T-cell (primary cell): ENCODE measurements at regions of chr17 and their contacts with region 1.

Region 1: DNA sequence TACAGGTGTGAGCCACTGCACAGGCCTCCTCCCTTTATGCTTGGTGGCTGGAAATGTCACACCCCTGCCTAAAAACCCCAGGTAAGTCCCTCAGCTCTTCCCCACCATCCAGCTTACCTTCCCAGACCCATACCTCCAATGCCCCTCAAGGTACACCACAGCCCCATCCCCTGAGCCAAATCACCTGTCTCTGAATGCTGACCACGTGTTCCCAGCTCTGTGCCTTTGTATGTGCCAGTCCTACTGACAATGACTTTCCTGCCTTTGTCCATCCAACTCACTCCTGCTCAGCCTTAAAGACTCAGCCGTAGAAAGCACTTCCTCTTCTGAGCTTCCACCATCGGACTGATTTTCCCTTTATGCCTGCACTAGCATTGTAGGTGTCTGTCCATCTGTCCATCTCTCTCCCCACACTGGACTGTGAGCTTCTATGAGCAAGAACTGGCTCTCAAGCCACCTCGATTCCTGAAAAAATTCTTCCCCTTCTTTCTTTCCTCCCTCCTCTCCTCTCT is 30.7 kb upstream of the GOSR2 start:
- DNase-seq: no peak
- ATAC-seq: no peak
- H3K4me3 ChIP-seq: no peak overlapping the region
- H3K4me3 Mint-ChIP-seq: no peak overlapping the region
- H3K27ac ChIP-seq: no peak overlapping the region
- H3K27ac Mint-ChIP-seq: no peak overlapping the region
- H3K4me1 ChIP-seq: no peaks in the 10 kb centered on the region
- H3K4me1 Mint-ChIP-seq: no peaks in the 10 kb centered on the region
- H3K27me3 ChIP-seq: peaks cover 0 to 47% of the 10 kb centered on the region in 2 experiments
- H3K27me3 Mint-ChIP-seq: peaks cover 9 to 24% of the 10 kb centered on the region in 2 donors

Region 2: GRCh38 chr17:46811978-46812583 is 80.2 kb before region 1 on chr17:
- CTCF ChIA-PET with region 1: no interaction called
- POLR2A ChIA-PET with region 1: no interaction called
- DNase-seq: no peak
- ATAC-seq: no peak
- H3K4me3 ChIP-seq: no peak overlapping the region
- H3K4me3 Mint-ChIP-seq: no peak overlapping the region
- H3K27ac ChIP-seq: no peak overlapping the region
- H3K27ac Mint-ChIP-seq: no peak overlapping the region
- H3K4me1 ChIP-seq: peaks cover 0 to 2% of the 10 kb centered on the region in 2 experiments
- H3K4me1 Mint-ChIP-seq: peaks cover 0 to 3% (median 3%) of the 10 kb centered on the region in 3 donors
- H3K27me3 ChIP-seq: peaks cover 0 to 75% of the 10 kb centered on the region in 2 experiments
- H3K27me3 Mint-ChIP-seq: peaks cover 38 to 60% of the 10 kb centered on the region in 2 donors

Region 3: DNA sequence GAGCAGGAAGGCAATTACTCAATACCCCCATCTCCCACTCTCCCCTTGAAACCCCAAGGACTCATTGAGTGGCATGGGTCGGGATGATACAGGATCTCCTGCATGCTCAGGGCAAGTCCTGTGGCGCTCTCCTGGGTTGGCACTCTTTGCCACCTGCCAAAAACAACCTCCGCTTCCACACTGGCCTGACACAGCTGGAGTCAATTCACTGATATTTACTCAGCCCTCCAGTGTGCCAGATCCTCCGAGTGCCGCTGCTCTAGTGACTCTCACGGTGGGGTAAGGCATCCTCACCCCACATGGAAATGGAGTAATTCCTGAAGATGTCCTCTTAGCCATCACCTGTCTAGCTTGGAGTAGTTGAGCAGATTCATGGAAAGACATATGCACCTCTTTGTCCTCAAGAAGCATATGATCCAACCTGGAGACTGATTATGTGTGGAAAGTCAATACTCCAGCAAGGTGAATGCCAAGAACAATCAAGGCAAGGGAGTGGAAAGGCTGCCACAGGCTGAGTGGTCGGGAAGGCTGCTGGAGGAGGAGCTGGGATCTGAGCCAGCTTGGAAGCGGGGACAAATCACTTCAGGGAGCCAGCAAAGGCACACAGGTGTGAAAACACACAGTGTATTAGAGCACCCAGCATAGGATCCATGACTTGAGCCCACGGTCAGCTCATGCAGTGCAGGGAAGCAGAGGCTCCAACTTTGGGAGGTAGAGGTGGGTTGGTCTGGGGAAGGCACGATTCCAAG is 18.1 kb after region 1 on chr17:
- CTCF ChIA-PET with region 1: no interaction called
- POLR2A ChIA-PET with region 1: interaction called in 1 of 2 experiments, 10 read pairs
- DNase-seq: no peak
- ATAC-seq: no peak
- H3K4me3 ChIP-seq: no peak overlapping the region
- H3K4me3 Mint-ChIP-seq: no peak overlapping the region
- H3K27ac ChIP-seq: no peak overlapping the region
- H3K27ac Mint-ChIP-seq: no peak overlapping the region
- H3K4me1 ChIP-seq: peaks cover 0 to 5% of the 10 kb centered on the region in 2 experiments
- H3K4me1 Mint-ChIP-seq: peaks cover 0 to 7% (median 5%) of the 10 kb centered on the region in 3 donors
- H3K27me3 ChIP-seq: peaks cover 0 to 45% of the 10 kb centered on the region in 2 experiments
- H3K27me3 Mint-ChIP-seq: peaks cover 17% of the 10 kb centered on the region in 2 donors